ENCODE measurements at regions of chr15 and their contacts with region 1.

Region 1: GRCh38 chr15:34241372-34242330 is 16.8 kb downstream of the EMC4 start:
- DNase-seq: peak; percentile 62
- H3K4me3 ChIP-seq: no peak overlapping the region
- H3K27ac ChIP-seq: peak overlapping the region; percentile 99
- H3K4me1 ChIP-seq: peaks cover 29% of the 10 kb centered on the region
- H3K27me3 ChIP-seq: no peaks in the 10 kb centered on the region
- CTCF ChIP-seq: peak; percentile 82 to 88

Region 2: GRCh38 chr15:34284937-34285336 is 43.3 kb after region 1 on chr15:
- CTCF ChIA-PET with region 1: no interaction called
- dilution Hi-C with region 1: loop called (anchors 5 kb)
- in situ Hi-C with region 1: no loop called
- intact Hi-C with region 1: loop called (anchors 1 kb)
- DNase-seq: no peak
- H3K4me3 ChIP-seq: no peak overlapping the region
- H3K27ac ChIP-seq: no peak overlapping the region
- H3K4me1 ChIP-seq: no peaks in the 10 kb centered on the region
- H3K27me3 ChIP-seq: no peaks in the 10 kb centered on the region
- CTCF ChIP-seq: no peak

Region 3: DNA sequence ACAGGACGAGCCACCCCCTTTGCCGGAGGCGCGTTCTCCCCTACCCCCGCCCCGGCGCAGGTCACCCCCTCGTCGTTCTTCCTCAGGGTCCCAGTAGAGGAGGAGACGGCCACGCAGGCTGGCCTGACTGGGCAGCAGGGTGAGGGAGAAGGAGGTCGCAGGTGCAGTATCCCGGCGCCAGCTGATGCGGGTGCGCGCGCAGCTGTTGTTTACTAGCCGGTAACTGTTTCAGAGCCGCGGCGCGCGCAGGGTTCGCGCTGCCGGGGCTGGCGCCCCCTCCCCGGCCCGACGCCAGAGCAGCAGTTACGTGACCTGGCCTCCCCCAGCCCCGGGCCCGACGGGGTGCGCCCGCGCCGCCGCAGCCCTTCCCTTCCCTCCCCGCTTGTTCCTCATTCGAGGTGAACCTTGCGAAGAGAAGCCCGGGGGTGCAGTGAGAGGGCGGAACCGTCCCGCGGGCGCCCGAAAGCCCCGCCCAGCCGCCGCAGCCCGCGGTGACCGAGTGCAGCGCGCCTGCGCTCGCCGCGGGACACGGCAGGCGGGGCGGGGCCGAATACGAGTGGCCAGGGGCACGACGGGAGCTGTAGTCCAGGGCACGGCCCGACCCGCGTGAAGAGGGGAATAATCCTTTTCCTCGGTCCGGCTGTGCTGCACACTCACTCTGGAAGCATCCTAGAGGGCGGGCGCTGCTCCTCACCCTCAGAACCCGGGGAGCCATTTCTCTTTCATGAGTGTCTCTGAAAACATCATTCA is 96.1 kb after region 1 on chr15 and contains the start of gene SLC12A6:
- CTCF ChIA-PET with region 1: interaction called, 3 read pairs
- dilution Hi-C with region 1: no loop called
- in situ Hi-C with region 1: loop called (anchors 10 to 25 kb)
- intact Hi-C with region 1: loop called (anchors 1 kb)
- DNase-seq: peak; percentile 91
- H3K4me3 ChIP-seq: peak within 1 kb of the TSS; percentile 74 to 95 (median 80)
- H3K27ac ChIP-seq: peak within 1 kb of the TSS; percentile 44
- H3K4me1 ChIP-seq: peaks cover 13% of the 10 kb centered on the region
- H3K27me3 ChIP-seq: no peaks in the 10 kb centered on the region
- CTCF ChIP-seq: no peak
- total RNA-seq, gene SLC12A6: 15.2 to 17.6 TPM

Region 4: DNA sequence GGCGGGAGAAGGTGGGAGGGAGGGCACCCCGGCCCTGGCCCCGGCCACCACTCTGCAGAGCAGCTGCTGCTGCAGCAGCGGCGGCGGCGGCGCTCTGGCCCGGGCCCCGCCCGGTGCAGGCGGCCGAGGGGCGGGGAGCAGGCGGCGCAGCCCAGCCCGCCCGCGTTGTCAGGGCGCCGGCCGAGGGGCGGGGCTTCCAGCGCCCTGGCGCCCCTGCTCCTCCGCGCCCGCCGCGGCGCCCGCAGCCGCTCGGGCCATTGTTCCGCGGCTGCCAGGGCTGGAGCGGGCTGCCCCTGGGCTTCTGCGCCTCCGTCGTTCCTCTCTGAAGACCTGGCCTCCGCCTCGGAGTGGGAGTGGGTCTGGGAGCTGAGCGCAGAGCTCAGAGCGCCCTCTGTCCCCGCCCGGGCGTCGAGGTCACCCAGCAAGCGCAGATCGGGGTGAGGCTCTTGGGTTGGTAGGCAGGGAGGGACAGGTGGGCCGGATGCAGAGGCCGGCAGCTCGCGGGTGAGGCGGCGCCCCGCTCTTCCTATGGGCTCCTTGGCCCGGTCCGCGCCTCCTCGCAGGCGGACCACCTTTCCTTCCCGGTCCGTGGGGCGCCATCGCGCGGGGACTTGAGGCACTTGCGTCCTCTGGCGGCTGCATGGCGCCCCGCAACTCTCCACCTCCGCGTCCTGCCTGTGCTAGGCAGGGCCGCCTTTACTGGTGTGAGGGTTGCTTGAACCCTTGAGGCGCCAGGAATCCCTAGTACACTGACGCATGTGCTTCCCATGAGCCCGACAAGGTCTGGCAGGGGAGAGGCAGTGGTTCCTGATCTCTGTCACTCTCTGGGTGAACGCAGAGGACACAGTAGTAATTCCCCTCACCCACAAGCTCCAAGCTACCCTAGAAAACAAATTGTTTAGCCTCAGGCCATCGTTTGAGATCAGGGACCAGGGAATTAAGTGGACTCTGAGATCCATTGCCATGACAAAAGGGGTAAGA is 125.7 kb after region 1 on chr15 and contains the start of gene LPCAT4:
- CTCF ChIA-PET with region 1: no interaction called
- dilution Hi-C with region 1: no loop called
- in situ Hi-C with region 1: no loop called
- intact Hi-C with region 1: loop called (anchors 1 kb)
- DNase-seq: peak; percentile 87
- H3K4me3 ChIP-seq: peak within 1 kb of the TSS; percentile 68 to 89 (median 77)
- H3K27ac ChIP-seq: peak within 1 kb of the TSS; percentile 46
- H3K4me1 ChIP-seq: peaks cover 25% of the 10 kb centered on the region
- H3K27me3 ChIP-seq: no peaks in the 10 kb centered on the region
- CTCF ChIP-seq: peak; percentile 70 to 96
- total RNA-seq, gene LPCAT4: 9.5 to 74.6 TPM

Region 5: DNA sequence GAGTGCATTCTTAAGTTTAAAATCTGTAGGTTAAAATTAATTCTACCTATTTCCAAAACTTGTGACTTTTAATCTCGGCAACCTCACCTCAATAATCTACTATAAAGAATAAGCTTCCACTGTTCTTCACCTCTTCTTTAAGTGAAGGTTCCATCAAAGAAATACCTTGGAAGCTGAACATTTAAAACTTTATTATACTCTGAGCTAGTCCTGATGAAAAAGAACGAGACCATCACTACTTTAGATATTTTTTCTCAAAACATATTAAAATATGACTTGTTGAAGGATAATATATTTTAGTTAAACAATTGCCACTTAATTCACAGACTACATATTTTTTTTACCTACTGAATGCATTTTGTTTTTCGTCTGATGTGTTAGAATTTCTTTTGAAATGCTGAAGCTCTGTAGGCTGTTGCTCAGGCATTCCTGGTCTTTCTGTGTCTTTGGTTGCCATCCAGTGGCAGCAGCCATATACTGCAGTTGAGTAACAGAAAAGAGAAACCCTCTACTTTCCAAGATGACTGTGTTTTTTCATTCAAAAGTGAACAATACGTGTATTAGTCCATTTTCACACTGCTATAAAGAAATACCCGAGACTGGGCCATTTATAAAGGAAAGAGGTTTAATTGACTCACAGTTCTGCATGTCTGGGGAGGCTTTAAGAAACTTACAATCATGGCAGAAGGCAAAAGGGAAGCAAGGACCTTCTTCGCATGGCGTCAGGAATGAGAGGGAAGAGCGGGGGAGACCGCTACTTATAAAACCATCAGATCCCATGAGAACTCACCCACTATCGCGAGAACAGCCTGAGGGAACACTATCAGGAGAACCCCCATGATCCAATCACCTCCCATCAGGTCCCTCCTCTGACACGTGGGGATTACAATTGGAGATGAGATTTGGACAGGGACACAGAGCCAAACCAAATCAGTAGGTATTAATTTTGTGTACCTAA is 346.3 kb after region 1 on chr15:
- CTCF ChIA-PET with region 1: no interaction called
- dilution Hi-C with region 1: no loop called
- in situ Hi-C with region 1: loop called (anchors 25 kb)
- intact Hi-C with region 1: no loop called
- DNase-seq: peak; percentile 78
- H3K4me3 ChIP-seq: peak overlapping the region; percentile 5 to 60 (median 29)
- H3K27ac ChIP-seq: peak overlapping the region; percentile 22
- H3K4me1 ChIP-seq: peaks cover 8% of the 10 kb centered on the region
- H3K27me3 ChIP-seq: no peaks in the 10 kb centered on the region
- CTCF ChIP-seq: peak; percentile 71 to 75